ENCODE measurements at regions of chr18 and their contacts with region 1.

Region 1: GRCh38 chr18:62714671-62715435 is 488 bp upstream of the PHLPP1 start:
- DNase-seq: peak; percentile 98
- H3K4me3 Mint-ChIP-seq: peak overlapping the region; percentile 79
- H3K27ac Mint-ChIP-seq: peak overlapping the region; percentile 74
- H3K4me1 Mint-ChIP-seq: peaks cover 26% of the 10 kb centered on the region
- H3K27me3 Mint-ChIP-seq: peaks cover 6% of the 10 kb centered on the region

Region 2: GRCh38 chr18:62324917-62325805 is 389.7 kb before region 1 on chr18 and contains the start of gene TNFRSF11A:
- CTCF ChIA-PET with region 1: no interaction called
- intact Hi-C with region 1: loop called (anchors 10 kb)
- DNase-seq: peak; percentile 73
- H3K4me3 Mint-ChIP-seq: peak within 1 kb of the TSS; percentile 77
- H3K27ac Mint-ChIP-seq: peak within 1 kb of the TSS; percentile 28
- H3K4me1 Mint-ChIP-seq: peaks cover 19% of the 10 kb centered on the region
- H3K27me3 Mint-ChIP-seq: peaks cover 70% of the 10 kb centered on the region
- total RNA-seq, gene TNFRSF11A: 3.1 to 3.5 TPM

Region 3: DNA sequence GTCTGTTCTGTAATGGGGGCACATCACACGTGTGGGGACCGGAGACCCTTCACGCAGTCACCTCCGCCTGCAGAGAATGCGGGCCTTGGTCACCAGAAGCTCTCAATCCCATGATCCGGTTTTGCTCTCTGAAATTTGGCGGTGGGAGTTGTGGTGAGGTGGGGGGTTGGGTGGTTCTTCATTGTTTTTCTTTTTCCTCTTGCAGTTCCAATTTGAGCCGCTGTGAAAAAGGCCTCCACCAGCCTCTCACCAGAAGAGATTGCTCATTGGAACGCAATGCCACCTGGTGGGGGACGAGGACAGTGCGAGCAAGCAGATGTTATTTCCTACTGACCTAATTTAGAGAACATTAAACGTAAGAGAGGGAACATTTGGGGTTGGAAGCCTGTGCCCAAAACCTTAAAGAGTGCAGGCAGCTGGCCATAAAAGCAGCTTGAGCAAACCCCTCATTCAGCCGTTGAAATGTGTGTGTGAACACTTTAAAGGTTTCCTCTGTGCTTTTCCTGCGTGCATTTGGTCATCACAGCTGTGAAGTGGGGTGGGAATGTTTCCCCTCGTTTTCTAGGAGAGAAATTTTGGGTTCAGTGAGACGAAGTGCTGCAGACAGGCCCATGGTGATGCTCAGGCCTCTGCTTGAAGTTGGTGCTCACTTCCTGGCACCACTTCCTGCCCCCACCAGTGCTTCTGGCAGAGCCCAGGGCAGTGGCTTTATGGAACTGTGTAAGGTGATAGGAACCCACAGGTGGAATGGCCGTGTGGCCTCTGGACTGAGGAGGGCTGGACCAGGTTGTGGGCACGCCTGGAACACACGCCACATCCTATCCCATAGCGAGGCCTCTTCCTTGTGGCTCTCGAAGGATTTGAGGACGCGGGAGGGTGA is 130.4 kb before region 1 on chr18:
- CTCF ChIA-PET with region 1: interaction called, 7 read pairs
- intact Hi-C with region 1: loop called (anchors 1 kb)
- DNase-seq: peak; percentile 93
- H3K4me3 Mint-ChIP-seq: peak overlapping the region; percentile 2
- H3K27ac Mint-ChIP-seq: peak overlapping the region; percentile 92
- H3K4me1 Mint-ChIP-seq: peaks cover 42% of the 10 kb centered on the region
- H3K27me3 Mint-ChIP-seq: no peaks in the 10 kb centered on the region

Region 4: DNA sequence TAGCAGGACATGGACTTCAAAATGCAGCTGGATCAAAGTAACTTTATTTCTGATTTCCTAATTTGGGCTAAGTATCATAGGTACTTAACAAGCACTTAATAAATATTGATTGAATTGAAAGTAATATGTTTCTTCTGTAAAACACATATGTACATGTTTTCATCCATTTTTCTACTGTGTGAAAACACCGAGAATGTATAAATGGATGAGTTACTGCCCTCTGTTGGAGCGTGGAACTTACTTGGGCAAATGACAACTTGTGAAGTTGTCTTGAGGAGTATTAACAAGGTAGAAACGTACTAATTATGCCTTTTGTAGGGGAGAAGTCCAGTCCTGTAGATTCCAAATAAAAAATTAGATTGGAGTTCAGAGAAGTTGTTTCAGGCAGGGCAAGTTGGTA is 87.7 kb after region 1 on chr18:
- CTCF ChIA-PET with region 1: interaction called, 6 read pairs
- intact Hi-C with region 1: loop called (anchors 1 kb)
- DNase-seq: no peak
- H3K4me3 Mint-ChIP-seq: no peak overlapping the region
- H3K27ac Mint-ChIP-seq: no peak overlapping the region
- H3K4me1 Mint-ChIP-seq: no peaks in the 10 kb centered on the region
- H3K27me3 Mint-ChIP-seq: no peaks in the 10 kb centered on the region

Region 5: DNA sequence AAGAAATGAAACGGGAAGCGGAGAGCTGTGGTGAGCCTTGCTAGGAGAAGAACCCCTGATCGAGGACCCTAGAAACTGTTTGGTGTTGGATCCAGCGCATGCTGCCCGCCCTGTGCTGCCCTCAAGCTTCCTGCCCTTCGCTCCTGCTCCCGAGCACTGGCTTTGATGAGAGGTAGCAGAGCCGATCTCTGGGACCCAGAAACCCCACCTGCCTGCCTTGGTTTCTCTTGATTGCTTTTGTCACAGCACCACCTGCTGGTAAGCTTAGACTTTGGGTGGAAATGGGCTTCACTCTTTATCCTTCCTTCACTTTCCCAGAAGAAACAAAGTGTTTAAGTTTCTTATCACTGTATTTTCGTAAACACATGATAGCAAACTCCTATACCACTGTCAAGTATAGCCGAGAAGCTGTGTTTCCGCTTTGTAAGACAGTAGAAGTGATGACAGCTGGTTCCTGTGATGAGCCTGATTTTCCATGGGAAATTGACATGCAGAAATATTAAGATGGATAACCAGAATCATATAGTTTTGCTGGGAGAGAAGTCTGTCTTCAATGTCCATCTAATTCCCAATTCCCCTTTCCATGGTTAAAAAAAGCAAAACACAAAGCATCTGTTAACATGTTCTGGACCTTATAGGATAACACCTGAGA is 267.9 kb after region 1 on chr18:
- CTCF ChIA-PET with region 1: interaction called, 22 read pairs
- intact Hi-C with region 1: loop called (anchors 1 kb)
- DNase-seq: peak; percentile 75
- H3K4me3 Mint-ChIP-seq: no peak overlapping the region
- H3K27ac Mint-ChIP-seq: no peak overlapping the region
- H3K4me1 Mint-ChIP-seq: no peaks in the 10 kb centered on the region
- H3K27me3 Mint-ChIP-seq: no peaks in the 10 kb centered on the region

Region 6: DNA sequence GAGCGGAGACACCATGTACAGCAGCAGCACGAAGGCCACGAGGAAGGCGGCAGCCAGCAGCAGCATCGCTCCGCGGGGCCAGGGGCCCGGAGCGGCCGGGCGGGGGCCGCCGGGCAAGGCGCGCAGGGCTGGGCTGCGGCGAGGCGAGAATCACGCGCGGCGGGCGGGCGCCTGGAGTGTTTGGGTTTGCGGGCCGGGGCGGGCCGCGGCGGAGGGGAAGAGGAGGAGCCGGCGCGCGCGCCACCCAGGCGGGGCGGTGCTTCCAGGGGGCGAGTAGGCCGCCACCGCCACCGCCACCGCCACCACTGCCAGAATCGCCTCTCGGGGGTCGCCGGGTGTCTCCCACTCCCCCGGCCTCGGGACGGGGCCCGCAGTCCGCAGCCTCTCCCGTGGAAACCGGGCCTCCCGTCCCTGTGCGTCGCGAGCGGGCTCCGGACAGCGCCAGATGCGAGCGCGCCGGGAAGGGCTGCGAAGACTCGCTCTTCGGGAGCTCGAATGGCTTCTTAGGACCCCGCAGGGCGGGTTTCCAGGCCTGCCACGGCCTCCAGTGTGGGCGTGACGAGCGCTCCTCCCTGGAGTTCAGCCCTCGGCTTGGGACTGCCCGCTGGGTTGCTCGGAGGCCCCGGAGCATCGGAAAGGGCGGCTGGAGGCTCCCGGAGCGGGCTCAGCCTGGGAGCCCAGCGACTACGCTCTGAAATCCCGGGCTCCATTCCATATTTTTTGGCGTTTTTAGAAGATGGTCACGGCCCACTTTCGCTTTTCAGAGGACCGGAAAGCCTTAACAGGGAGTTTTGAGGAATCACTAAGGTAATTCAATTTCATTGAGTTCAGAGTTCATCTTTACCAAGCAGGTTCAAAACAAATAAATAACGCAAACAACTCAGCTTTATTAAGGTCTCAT is 652.5 kb after region 1 on chr18 and contains the start of gene KDSR:
- CTCF ChIA-PET with region 1: no interaction called
- intact Hi-C with region 1: loop called (anchors 2 kb)
- DNase-seq: peak; percentile 85
- H3K4me3 Mint-ChIP-seq: peak within 1 kb of the TSS; percentile 84
- H3K27ac Mint-ChIP-seq: peak within 1 kb of the TSS; percentile 79
- H3K4me1 Mint-ChIP-seq: peaks cover 26% of the 10 kb centered on the region
- H3K27me3 Mint-ChIP-seq: no peaks in the 10 kb centered on the region
- total RNA-seq, gene KDSR: 75.2 to 81.5 TPM